ENCODE measurements at regions of chr3 and their contacts with region 1.

Region 1: DNA sequence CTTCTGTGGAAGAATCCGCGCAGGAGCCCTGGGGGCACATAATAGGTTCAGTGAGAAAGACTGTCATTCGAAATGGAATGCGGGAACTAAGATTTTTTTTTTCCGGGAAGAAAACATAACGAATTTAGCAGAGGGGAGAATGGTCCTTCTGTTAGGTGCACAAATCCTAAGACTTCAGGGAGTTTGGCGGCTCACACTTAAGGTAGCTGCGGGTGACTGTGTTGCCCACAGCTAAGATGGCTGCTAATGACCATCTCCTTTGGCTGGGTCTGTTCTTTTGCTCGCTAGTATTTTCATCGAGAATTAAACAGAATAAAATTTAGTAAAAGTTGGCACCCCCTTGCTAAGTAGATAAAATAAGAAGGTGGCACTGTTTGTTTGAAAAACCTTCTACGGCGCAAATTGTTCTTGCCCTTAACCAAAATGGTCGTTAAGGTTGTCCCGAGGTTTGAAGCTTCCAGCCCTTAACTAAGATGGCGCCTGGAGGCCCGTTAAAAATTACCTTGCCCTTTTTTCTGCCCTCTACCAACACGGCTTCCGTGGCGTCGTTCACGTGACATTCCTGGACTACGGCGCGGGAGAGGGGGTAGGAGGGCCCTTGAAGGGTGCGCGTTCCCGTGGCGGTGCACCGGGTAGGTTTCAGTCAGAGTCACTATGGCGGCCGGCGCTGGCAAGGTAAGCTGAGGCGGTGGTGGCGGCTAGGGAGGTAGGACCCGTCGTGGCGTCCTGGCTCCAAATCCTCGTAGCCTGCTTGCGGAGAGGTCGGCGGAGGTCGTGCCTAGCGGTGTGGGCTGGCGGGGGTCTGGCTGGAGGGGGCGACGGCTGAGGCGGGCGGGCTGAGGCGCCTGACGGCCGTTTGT is at the start of gene SLMAP:
- DNase-seq: peak; percentile 99
- H3K4me3 Mint-ChIP-seq: peak within 1 kb of the TSS; percentile 97
- H3K27ac Mint-ChIP-seq: peak within 1 kb of the TSS; percentile 98
- H3K4me1 Mint-ChIP-seq: peaks cover 27% of the 10 kb centered on the region
- H3K27me3 Mint-ChIP-seq: no peaks in the 10 kb centered on the region
- CTCF ChIP-seq: no peak
- total RNA-seq, gene SLMAP: 71.0 and 77.9 TPM in 2 replicates

Region 2: DNA sequence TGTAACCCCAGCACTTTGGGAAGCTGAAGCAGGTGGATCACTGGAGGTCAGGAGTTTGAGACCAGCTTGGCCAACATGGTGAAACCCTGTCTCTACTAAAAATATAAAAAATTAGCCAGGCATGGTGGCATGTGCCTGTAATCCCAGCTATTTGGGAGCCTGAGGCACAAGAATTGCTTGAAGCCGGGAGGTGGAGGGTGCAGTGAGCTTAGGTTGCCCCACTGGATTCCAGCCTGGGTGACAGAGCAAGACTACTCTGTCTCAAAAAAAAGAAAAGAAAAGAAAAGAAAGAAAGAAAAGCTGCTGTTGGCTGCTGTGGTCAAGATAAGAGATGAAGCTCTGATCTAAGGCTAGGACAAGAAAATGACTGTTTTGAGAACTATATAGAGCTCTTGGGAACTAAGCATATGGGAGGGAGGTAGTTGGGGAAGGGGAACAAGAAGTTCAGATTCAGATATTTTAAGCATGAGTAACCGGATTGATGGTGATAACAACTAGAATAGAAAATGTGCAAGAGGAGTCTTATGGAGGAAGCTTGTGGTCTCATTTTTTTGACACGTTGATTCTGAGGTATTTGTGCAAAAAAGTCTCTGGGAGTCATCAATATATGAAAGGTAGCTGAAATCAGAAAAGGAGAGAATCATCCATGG is 237.5 kb before region 1 on chr3:
- CTCF ChIA-PET with region 1: no interaction called
- POLR2A ChIA-PET with region 1: no interaction called
- intact Hi-C with region 1: no loop called
- DNase-seq: no peak
- H3K4me3 Mint-ChIP-seq: no peak overlapping the region
- H3K27ac Mint-ChIP-seq: no peak overlapping the region
- H3K4me1 Mint-ChIP-seq: peaks cover 10% of the 10 kb centered on the region
- H3K27me3 Mint-ChIP-seq: no peaks in the 10 kb centered on the region
- CTCF ChIP-seq: no peak

Region 3: GRCh38 chr3:57646723-57647122 is 109.2 kb before region 1 on chr3:
- CTCF ChIA-PET with region 1: interaction called, 4 read pairs
- POLR2A ChIA-PET with region 1: interaction called, 4 read pairs
- intact Hi-C with region 1: loop called (anchors 1 kb)
- DNase-seq: peak; percentile 36
- H3K4me3 Mint-ChIP-seq: no peak overlapping the region
- H3K27ac Mint-ChIP-seq: peak overlapping the region; percentile 80
- H3K4me1 Mint-ChIP-seq: peaks cover 10% of the 10 kb centered on the region
- H3K27me3 Mint-ChIP-seq: no peaks in the 10 kb centered on the region
- CTCF ChIP-seq: peak; percentile 23

Region 4: DNA sequence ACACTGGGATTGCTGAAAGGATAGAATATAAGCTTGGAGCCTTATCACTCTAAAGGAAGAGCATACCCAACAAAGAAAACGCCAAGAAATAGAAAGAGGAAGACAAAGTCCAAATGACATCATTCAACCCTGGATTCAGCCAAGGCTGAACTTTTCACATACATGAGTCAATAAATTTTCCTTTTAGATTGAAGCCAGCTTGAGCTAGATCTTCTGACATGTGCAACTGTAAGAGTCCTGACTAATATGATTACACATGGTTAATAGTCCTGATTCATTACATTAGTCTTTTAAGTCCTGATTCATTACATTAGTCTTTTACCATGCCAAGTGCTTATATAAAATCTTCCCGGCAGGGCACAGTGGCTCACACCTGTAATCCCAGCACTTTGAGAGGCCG is 49.4 kb before region 1 on chr3:
- CTCF ChIA-PET with region 1: no interaction called
- POLR2A ChIA-PET with region 1: interaction called, 5 read pairs
- intact Hi-C with region 1: loop called (anchors 2 kb)
- DNase-seq: peak; percentile 60
- H3K4me3 Mint-ChIP-seq: no peak overlapping the region
- H3K27ac Mint-ChIP-seq: no peak overlapping the region
- H3K4me1 Mint-ChIP-seq: peaks cover 13% of the 10 kb centered on the region
- H3K27me3 Mint-ChIP-seq: no peaks in the 10 kb centered on the region
- CTCF ChIP-seq: no peak

Region 5: DNA sequence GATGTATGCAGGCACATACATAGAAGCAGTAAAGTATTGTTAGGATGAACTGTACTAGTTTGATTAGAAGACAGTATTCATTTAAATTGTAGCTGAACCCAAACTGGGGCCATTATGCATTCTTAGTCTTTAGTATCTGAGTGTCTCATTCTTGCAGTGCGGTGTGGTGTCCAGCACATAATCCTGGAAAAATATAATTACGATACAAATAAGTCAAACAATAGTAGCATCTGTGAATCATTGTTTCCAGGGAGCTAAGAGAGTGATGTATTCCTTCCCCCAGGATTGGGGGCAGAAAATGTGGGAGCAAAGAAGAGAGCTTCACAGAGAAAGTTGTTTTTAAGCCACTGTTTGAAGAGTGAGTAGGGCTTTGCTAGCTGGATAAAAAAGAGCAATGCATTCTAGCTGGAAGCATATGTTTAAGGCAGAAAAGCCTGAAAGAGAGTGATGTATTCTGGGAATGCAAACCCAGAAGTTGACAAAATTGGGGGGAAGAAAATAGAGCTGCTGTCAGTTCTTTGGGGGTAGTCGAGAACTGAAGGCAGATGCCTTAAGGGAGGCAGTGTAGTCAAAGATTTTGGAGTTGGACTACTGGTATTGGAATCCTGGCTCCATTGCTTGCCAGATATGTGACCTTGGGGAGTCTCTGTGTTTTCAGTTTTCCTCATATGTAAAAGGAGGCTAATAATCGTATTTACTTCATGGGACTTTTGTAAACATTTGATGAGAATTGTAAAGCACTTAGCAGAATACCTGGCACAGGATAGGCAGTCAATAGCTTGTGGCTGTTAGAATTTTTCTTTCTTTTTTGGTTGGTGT is 14.3 kb after region 1 on chr3:
- CTCF ChIA-PET with region 1: interaction called, 7 read pairs
- POLR2A ChIA-PET with region 1: interaction called, 25 read pairs
- intact Hi-C with region 1: no loop called
- DNase-seq: no peak
- H3K4me3 Mint-ChIP-seq: no peak overlapping the region
- H3K27ac Mint-ChIP-seq: no peak overlapping the region
- H3K4me1 Mint-ChIP-seq: peaks cover 21% of the 10 kb centered on the region
- H3K27me3 Mint-ChIP-seq: no peaks in the 10 kb centered on the region
- CTCF ChIP-seq: no peak

Region 6: DNA sequence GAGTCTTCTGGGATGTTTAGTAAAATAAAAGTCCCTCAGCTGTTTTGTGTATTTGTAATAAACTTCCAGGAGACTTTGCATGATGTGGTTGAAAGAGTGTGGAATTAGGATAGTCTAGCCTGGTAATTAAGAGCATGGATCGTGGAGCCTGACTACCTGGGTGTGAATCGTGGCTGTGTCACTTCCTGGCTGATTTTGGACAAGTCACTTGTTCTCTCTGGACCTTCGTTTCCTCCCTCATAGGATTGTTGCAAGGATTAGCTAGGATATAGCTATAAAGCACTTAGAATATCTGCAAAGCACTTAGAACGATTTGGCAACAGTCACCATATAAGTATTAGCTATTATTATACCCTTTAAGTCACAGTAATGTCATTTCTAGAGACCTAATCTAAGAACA is 40.4 kb after region 1 on chr3:
- CTCF ChIA-PET with region 1: no interaction called
- POLR2A ChIA-PET with region 1: interaction called, 47 read pairs
- intact Hi-C with region 1: no loop called
- DNase-seq: no peak
- H3K4me3 Mint-ChIP-seq: peak overlapping the region; percentile 5
- H3K27ac Mint-ChIP-seq: peak overlapping the region; percentile 65
- H3K4me1 Mint-ChIP-seq: peaks cover 33% of the 10 kb centered on the region
- H3K27me3 Mint-ChIP-seq: no peaks in the 10 kb centered on the region
- CTCF ChIP-seq: no peak

Region 7: DNA sequence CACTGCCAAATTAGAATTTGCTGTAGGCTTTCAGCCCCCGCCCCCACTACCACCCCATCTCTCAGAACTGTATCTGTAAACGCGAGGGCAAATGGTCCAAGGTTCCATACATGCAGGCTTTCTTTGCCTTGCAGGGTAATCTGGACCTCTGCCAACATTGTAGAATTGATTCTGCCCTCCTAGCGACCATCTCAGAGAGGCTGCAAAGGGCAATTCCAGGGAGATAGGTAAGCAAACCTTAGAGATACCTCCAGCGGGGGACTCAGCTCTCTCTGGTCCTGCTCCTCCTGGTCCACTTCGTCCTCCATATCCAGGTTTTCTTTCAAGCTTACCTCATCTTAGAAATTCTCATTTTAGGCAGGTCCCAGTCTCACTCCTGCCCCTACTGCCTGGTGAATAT is 64.6 kb after region 1 on chr3:
- CTCF ChIA-PET with region 1: interaction called, 20 read pairs
- POLR2A ChIA-PET with region 1: interaction called, 52 read pairs
- intact Hi-C with region 1: no loop called
- DNase-seq: no peak
- H3K4me3 Mint-ChIP-seq: no peak overlapping the region
- H3K27ac Mint-ChIP-seq: no peak overlapping the region
- H3K4me1 Mint-ChIP-seq: peaks cover 20% of the 10 kb centered on the region
- H3K27me3 Mint-ChIP-seq: no peaks in the 10 kb centered on the region
- CTCF ChIP-seq: no peak

Region 8: GRCh38 chr3:57852896-57853295 is 97.0 kb after region 1 on chr3:
- CTCF ChIA-PET with region 1: interaction called, 4 read pairs
- POLR2A ChIA-PET with region 1: interaction called, 12 read pairs
- intact Hi-C with region 1: no loop called
- DNase-seq: peak; percentile 25
- H3K4me3 Mint-ChIP-seq: no peak overlapping the region
- H3K27ac Mint-ChIP-seq: no peak overlapping the region
- H3K4me1 Mint-ChIP-seq: peaks cover 6% of the 10 kb centered on the region
- H3K27me3 Mint-ChIP-seq: no peaks in the 10 kb centered on the region
- CTCF ChIP-seq: peak; percentile 24

Region 9: GRCh38 chr3:57961828-57962447 is 206.0 kb after region 1 on chr3:
- CTCF ChIA-PET with region 1: no interaction called
- POLR2A ChIA-PET with region 1: no interaction called
- intact Hi-C with region 1: no loop called
- DNase-seq: peak; percentile 79
- H3K4me3 Mint-ChIP-seq: no peak overlapping the region
- H3K27ac Mint-ChIP-seq: no peak overlapping the region
- H3K4me1 Mint-ChIP-seq: peaks cover 14% of the 10 kb centered on the region
- H3K27me3 Mint-ChIP-seq: no peaks in the 10 kb centered on the region
- CTCF ChIP-seq: peak; percentile 70

Measured in MCF 10A (cell line).